ENCODE measurements at regions of chr1 and their contacts with region 1.

Region 1: GRCh38 chr1:205600085-205600484 is 31.7 kb downstream of the ELK4 start:
- DNase-seq: peak; percentile 50
- H3K4me3 Mint-ChIP-seq: no peak overlapping the region
- H3K27ac Mint-ChIP-seq: peak overlapping the region; percentile 59
- H3K4me1 Mint-ChIP-seq: peaks cover 43% of the 10 kb centered on the region
- H3K27me3 Mint-ChIP-seq: no peaks in the 10 kb centered on the region

Region 2: DNA sequence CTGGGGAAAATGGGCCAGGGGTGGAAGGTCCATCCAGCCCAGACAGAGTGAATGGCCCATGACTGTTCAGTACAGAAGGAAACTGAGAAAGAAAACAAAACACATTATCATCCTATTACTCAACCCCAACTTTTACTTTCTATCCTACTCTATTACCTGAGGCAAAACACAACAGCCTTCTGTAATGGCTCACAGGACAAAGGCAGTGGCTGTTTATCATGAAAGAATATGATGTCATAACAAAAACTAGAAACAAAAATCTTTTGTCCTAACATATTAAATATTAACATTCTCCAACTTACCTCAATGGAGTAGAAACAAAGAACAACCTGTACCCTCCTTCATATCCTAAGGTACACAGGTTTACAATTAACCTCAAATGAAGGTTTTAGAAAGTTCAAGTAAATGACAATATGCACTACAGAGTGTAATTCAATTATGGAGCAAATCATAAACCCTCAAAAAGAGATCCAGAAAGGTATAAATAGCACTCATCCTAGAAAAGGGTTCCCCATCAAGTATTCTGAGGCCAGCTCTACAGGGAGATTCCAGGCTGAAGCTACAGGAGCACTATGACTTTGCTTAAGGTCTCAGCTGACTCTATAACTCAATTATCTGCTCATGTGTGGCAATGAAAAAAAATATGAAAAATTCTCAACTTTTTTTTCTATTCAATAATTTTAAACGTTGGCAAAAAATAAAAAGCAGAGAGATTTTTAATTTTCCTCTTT is 16.6 kb after region 1 on chr1:
- CTCF ChIA-PET with region 1: interaction called, 7 read pairs
- intact Hi-C with region 1: loop called (anchors 2 kb)
- DNase-seq: no peak
- H3K4me3 Mint-ChIP-seq: no peak overlapping the region
- H3K27ac Mint-ChIP-seq: peak overlapping the region; percentile 74
- H3K4me1 Mint-ChIP-seq: peaks cover 40% of the 10 kb centered on the region
- H3K27me3 Mint-ChIP-seq: no peaks in the 10 kb centered on the region

Measured in activated naive CD4-positive, alpha-beta T cell treated with anti-CD3 and anti-CD28 coated beads for 36 hours (primary cell).